CD8-positive, alpha-beta T cell (primary cell): ENCODE measurements at regions of chr7 and their contacts with region 1.

Region 1: DNA sequence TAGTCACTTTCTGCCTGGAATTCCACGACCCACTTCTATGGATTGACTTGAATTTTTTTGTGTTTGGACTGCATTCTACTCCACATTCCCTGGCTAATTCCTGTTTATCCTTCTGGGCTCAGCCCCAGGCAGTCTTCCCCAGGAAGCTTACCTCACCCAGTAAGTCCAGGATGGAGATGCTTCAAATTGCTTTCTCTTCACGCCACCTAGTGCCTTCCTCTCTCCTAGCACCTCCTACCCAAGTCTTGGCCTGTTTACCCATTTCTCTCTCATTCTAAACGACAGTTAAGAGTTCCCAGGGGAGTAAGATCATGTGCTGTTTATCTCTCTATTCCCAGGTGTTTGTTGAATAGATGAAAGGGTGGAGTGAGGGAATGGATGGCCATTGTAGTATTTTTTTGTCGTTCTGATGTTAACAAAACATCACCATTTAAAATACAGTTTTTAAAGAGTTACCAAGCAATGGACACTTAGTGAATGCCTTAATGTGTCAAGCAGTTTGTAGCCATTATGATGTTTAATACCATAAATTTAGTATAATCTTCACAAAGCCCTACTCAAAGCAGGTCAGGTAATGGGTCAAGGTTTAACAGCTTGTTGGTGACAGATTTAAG is 45.5 kb upstream of the TARP start:
- DNase-seq: peak in 2 of 9 experiments; percentile 61 to 74
- ATAC-seq: peak; percentile 30
- H3K4me3 ChIP-seq: peak overlapping the region in 1 of 2 experiments; percentile 50
- H3K4me3 Mint-ChIP-seq: peak overlapping the region; percentile 78
- H3K27ac ChIP-seq: peak overlapping the region in 1 of 2 experiments; percentile 81
- H3K27ac Mint-ChIP-seq: peak overlapping the region; percentile 91
- H3K4me1 ChIP-seq: peaks cover 37% of the 10 kb centered on the region
- H3K4me1 Mint-ChIP-seq: peaks cover 57% of the 10 kb centered on the region
- H3K27me3 ChIP-seq: no peaks in the 10 kb centered on the region
- H3K27me3 Mint-ChIP-seq: no peaks in the 10 kb centered on the region
- CTCF ChIP-seq: peak; percentile 39

Region 2: DNA sequence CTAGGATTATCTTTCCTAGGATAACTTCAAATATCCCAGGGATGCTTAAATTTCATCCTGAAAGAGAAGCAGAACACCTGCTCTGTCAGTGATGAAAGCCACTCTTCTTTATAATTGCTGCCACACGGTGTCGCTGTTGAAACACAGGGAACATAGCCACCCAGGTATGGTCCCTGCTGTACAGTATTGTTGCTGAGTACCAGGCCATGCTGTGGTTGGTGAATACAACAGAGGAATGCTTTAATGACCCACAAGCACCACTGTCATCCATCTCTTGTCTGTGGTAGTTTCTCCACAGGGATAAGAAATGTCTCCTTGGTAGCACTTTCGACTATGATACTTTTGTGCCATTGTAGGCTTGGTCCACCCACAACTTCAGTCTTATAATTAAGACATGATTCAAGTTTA is 211.4 kb before region 1 on chr7:
- CTCF ChIA-PET with region 1: interaction called, 4 read pairs
- POLR2A ChIA-PET with region 1: no interaction called
- intact Hi-C with region 1: loop called in 1 of 2 experiments (anchors 1 kb)
- DNase-seq: peak; percentile 33 to 80 (median 71)
- ATAC-seq: peak; percentile 87
- H3K4me3 ChIP-seq: no peak overlapping the region
- H3K4me3 Mint-ChIP-seq: no peak overlapping the region
- H3K27ac ChIP-seq: no peak overlapping the region
- H3K27ac Mint-ChIP-seq: no peak overlapping the region
- H3K4me1 ChIP-seq: no peaks in the 10 kb centered on the region
- H3K4me1 Mint-ChIP-seq: peaks cover 2% of the 10 kb centered on the region
- H3K27me3 ChIP-seq: peaks cover 0 to 2% of the 10 kb centered on the region in 2 experiments
- H3K27me3 Mint-ChIP-seq: peaks cover 8% of the 10 kb centered on the region
- CTCF ChIP-seq: peak; percentile 89

Region 3: GRCh38 chr7:38245409-38245977 is 73.4 kb before region 1 on chr7:
- CTCF ChIA-PET with region 1: no interaction called
- POLR2A ChIA-PET with region 1: no interaction called
- intact Hi-C with region 1: loop called in 1 of 2 experiments (anchors 5 kb)
- DNase-seq: peak in 3 of 9 experiments; percentile 35 to 83 (median 68)
- ATAC-seq: peak; percentile 50
- H3K4me3 ChIP-seq: peak overlapping the region in 1 of 2 experiments; percentile 16
- H3K4me3 Mint-ChIP-seq: peak overlapping the region; percentile 59
- H3K27ac ChIP-seq: peak overlapping the region in 1 of 2 experiments; percentile 85
- H3K27ac Mint-ChIP-seq: peak overlapping the region; percentile 88
- H3K4me1 ChIP-seq: peaks cover 10% of the 10 kb centered on the region
- H3K4me1 Mint-ChIP-seq: peaks cover 49% of the 10 kb centered on the region
- H3K27me3 ChIP-seq: no peaks in the 10 kb centered on the region
- H3K27me3 Mint-ChIP-seq: no peaks in the 10 kb centered on the region
- CTCF ChIP-seq: no peak

Region 4: DNA sequence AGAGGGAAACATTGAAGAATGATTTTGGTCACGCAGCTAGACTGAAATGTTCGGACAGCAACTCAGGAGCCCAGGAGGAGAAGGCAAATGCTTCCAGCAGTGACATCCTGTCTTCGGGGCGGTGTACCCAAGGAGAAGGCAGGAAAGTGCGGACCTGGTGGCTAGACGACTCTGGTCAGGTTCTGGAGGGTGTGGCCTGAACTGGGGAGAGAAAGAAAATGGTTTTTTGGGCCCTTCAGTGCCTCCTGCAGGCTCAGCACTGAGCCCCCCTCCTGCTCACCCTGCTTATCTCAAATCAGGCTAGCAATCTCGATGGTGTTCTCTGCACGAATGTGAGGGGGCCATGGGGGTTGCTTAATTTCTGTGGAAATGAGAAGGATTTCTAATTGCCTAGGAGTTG is 18.7 kb before region 1 on chr7:
- CTCF ChIA-PET with region 1: interaction called, 4 read pairs
- POLR2A ChIA-PET with region 1: interaction called, 5 read pairs
- intact Hi-C with region 1: loop called (anchors 1 to 2 kb)
- DNase-seq: peak in 2 of 9 experiments; percentile 58 to 68
- ATAC-seq: peak; percentile 62
- H3K4me3 ChIP-seq: peak overlapping the region in 1 of 2 experiments; percentile 54
- H3K4me3 Mint-ChIP-seq: peak overlapping the region; percentile 86
- H3K27ac ChIP-seq: peak overlapping the region; percentile 14 to 56
- H3K27ac Mint-ChIP-seq: peak overlapping the region; percentile 86
- H3K4me1 ChIP-seq: no peaks in the 10 kb centered on the region
- H3K4me1 Mint-ChIP-seq: peaks cover 18% of the 10 kb centered on the region
- H3K27me3 ChIP-seq: no peaks in the 10 kb centered on the region
- H3K27me3 Mint-ChIP-seq: no peaks in the 10 kb centered on the region
- CTCF ChIP-seq: no peak

Region 5: GRCh38 chr7:38306914-38307313 is 12.0 kb before region 1 on chr7:
- CTCF ChIA-PET with region 1: interaction called, 15 read pairs
- POLR2A ChIA-PET with region 1: interaction called, 5 read pairs
- intact Hi-C with region 1: no loop called
- DNase-seq: peak in 3 of 9 experiments; percentile 53 to 80 (median 70)
- ATAC-seq: peak; percentile 60
- H3K4me3 ChIP-seq: no peak overlapping the region
- H3K4me3 Mint-ChIP-seq: peak overlapping the region; percentile 69
- H3K27ac ChIP-seq: peak overlapping the region; percentile 53 to 76
- H3K27ac Mint-ChIP-seq: peak overlapping the region; percentile 89
- H3K4me1 ChIP-seq: peaks cover 30% of the 10 kb centered on the region
- H3K4me1 Mint-ChIP-seq: peaks cover 32% of the 10 kb centered on the region
- H3K27me3 ChIP-seq: no peaks in the 10 kb centered on the region
- H3K27me3 Mint-ChIP-seq: no peaks in the 10 kb centered on the region
- CTCF ChIP-seq: no peak